ENCODE measurements at regions of chr12 and their contacts with region 1.

Region 1: DNA sequence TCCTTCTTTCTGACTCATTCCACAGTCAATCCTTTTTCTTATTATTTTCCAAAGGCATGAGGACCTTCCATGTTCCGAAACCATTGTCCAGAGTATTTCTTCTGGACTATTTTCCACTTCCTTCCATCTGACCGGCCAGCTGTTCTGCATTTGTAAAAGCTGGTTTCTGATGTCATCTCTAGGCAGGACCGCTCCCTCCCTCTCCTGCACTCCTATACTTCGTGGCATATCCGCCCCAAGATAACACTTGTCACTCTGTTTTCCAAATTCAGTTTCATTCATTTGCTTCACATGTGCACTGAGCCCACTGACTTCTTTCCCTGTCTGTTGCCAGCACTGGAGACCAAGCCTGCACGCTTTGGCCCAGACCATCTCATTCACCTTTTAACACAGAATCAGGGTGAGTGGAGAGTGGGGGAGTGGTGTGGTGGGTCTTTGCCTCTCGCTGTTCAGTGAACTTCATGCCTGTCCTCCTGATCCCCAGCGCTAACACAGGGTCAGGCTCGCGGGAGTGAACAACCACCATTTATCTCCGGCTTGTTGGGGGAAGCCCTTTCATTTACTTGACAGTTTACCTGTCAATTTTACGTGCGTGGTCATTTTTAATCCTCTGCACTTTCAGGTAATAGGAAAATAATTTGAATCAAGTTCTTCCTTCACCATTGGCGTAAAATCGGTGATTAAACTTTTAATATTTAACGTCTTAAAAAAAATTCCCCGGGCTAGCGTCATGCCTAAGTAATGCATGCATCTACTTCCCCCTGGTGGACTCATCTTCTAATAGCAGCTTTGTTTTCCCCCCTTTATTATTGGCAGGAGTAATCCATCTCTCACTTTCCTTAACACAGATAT is 52.5 kb downstream of the C12orf75 start:
- DNase-seq: peak; percentile 4
- H3K4me3 Mint-ChIP-seq: no peak overlapping the region
- H3K27ac Mint-ChIP-seq: no peak overlapping the region
- H3K4me1 Mint-ChIP-seq: no peaks in the 10 kb centered on the region
- H3K27me3 Mint-ChIP-seq: no peaks in the 10 kb centered on the region

Region 2: GRCh38 chr12:104201238-104202001 is 1181.6 kb before region 1 on chr12:
- intact Hi-C with region 1: loop called (anchors 5 kb)
- DNase-seq: peak; percentile 24
- H3K4me3 Mint-ChIP-seq: no peak overlapping the region
- H3K27ac Mint-ChIP-seq: no peak overlapping the region
- H3K4me1 Mint-ChIP-seq: peaks cover 4% of the 10 kb centered on the region
- H3K27me3 Mint-ChIP-seq: peaks cover 12% of the 10 kb centered on the region

Region 3: DNA sequence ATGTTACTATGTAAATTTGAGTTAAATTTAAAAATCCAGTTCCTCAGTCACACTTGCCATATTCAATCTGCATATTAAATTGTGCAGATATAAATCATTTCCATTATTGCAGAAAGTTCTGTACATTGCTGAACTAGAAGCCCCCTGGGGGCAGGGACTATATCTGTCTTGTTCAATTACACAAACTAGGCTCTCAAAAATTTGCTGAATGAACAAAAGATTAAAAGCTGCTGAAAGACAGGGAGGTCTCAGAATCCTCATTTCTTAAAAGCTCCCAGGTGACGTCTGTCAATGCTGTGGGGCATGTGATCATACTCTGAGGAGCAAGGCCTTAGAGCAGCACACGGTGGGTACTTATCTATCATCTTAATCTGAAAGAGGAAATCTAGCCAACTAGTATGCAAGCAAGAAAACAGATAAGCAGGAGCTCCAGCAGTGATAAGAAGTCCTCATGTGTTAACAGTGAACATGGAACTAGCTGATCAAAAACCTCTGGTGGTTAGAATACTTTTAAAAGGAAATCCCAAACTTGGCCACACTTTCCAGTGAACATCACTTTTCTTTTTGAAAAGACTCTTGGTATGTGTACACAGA is 207.5 kb before region 1 on chr12:
- intact Hi-C with region 1: loop called (anchors 5 kb)
- DNase-seq: no peak
- H3K4me3 Mint-ChIP-seq: no peak overlapping the region
- H3K27ac Mint-ChIP-seq: no peak overlapping the region
- H3K4me1 Mint-ChIP-seq: no peaks in the 10 kb centered on the region
- H3K27me3 Mint-ChIP-seq: no peaks in the 10 kb centered on the region

Region 4: DNA sequence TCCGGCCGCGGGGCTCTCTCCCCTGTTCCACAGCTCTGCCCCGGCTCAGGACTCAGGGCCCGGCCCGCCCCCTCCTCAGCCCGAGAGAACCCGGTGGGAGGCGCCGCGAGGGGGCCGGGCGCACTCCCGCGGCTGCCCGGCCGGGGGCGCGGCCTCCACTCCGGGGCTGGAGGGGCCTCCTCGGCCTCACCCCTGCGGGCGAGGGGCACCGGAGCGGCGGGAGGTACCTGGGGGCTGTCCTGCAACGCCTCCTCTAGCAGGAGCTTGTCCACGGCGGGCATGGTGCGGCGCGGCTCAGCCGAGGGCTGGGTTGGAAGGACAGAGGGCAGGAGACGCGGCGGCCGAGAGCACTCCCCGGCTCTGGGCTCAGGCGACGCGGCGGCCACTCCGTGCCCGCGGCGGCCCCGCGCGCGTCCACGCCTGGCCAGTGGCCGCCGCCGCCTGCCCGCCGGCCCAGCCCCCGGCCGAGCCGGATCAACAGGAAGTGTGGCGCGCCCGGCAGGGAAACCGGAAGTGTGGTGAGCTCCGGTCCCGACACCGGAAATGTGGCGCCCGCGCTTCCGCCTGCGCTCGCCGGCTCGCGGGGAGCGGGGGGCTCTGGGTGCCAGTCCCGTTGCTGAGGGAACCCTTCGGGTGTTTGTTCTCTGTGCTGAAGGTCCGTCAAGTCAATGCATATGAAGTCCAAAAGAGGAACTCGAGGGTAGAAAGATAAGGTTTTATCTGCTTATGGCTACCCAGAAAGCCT is 147.1 kb before region 1 on chr12 and contains the start of gene APPL2:
- intact Hi-C with region 1: loop called (anchors 1 kb)
- DNase-seq: peak; percentile 71
- H3K4me3 Mint-ChIP-seq: peak within 1 kb of the TSS; percentile 91
- H3K27ac Mint-ChIP-seq: peak within 1 kb of the TSS; percentile 77
- H3K4me1 Mint-ChIP-seq: peaks cover 32% of the 10 kb centered on the region
- H3K27me3 Mint-ChIP-seq: peaks cover 3% of the 10 kb centered on the region
- total RNA-seq, gene APPL2: 22.9 and 27.8 TPM in 2 replicates

Region 5: GRCh38 chr12:105289114-105289904 is 93.7 kb before region 1 on chr12:
- intact Hi-C with region 1: no loop called
- DNase-seq: no peak
- H3K4me3 Mint-ChIP-seq: no peak overlapping the region
- H3K27ac Mint-ChIP-seq: no peak overlapping the region
- H3K4me1 Mint-ChIP-seq: no peaks in the 10 kb centered on the region
- H3K27me3 Mint-ChIP-seq: peaks cover 11% of the 10 kb centered on the region

Region 6: GRCh38 chr12:105319691-105320209 is 63.2 kb before region 1 on chr12:
- intact Hi-C with region 1: loop called (anchors 1 kb)
- DNase-seq: no peak
- H3K4me3 Mint-ChIP-seq: no peak overlapping the region
- H3K27ac Mint-ChIP-seq: no peak overlapping the region
- H3K4me1 Mint-ChIP-seq: peaks cover 51% of the 10 kb centered on the region
- H3K27me3 Mint-ChIP-seq: no peaks in the 10 kb centered on the region